ENCODE measurements at regions of chr7 and their contacts with region 1.

Region 1: GRCh38 chr7:139620676-139621344 is 97.3 kb downstream of the CLEC2L start:
- DNase-seq: peak; percentile 26
- H3K4me3 Mint-ChIP-seq: no peak overlapping the region
- H3K27ac Mint-ChIP-seq: peak overlapping the region; percentile 22
- H3K4me1 Mint-ChIP-seq: peaks cover 34% of the 10 kb centered on the region
- H3K27me3 Mint-ChIP-seq: peaks cover 1% of the 10 kb centered on the region

Region 2: DNA sequence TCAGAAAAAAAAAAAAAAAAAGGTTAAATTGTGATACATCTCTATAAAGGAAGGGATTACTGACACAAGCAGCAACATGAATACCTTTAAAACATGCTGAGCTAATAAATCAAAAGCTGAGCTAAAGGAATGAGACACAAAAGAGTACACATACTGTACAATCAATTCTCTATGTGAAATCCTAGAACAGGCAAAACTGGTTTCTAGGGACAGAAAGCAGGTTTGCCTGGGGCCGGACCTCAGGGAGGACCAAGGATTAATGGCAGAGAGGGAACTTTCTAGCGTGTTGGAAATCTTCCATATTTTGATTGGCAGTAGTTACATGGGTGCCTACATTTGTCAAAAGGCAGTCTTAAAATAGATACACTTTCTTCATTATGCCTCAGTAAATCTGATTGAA is 189.8 kb before region 1 on chr7:
- intact Hi-C with region 1: loop called (anchors 2 kb)
- DNase-seq: no peak
- H3K4me3 Mint-ChIP-seq: no peak overlapping the region
- H3K27ac Mint-ChIP-seq: no peak overlapping the region
- H3K4me1 Mint-ChIP-seq: peaks cover 6% of the 10 kb centered on the region
- H3K27me3 Mint-ChIP-seq: no peaks in the 10 kb centered on the region

Region 3: DNA sequence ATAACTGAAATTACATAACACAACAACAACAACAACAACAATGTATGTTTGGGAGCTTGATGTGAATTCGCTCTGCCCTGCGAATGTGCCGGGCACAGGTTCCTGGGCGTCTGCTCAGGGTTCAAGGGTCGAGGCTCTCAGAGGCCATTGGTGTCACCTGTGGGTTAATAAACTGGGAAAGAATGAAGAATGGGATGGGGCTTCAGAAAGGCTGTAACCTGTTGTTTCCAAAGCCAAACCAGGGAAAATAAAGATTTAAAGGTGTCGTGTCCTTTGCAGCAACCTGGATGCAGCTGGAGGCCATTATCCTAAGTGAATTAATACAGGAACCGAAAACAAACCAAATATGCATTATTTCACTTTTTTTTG is 120.1 kb before region 1 on chr7:
- intact Hi-C with region 1: loop called (anchors 1 kb)
- DNase-seq: no peak
- H3K4me3 Mint-ChIP-seq: no peak overlapping the region
- H3K27ac Mint-ChIP-seq: no peak overlapping the region
- H3K4me1 Mint-ChIP-seq: peaks cover 15% of the 10 kb centered on the region
- H3K27me3 Mint-ChIP-seq: peaks cover 21% of the 10 kb centered on the region

Region 4: GRCh38 chr7:139602143-139602722 is 18.6 kb before region 1 on chr7:
- intact Hi-C with region 1: loop called (anchors 1 kb)
- DNase-seq: no peak
- H3K4me3 Mint-ChIP-seq: no peak overlapping the region
- H3K27ac Mint-ChIP-seq: no peak overlapping the region
- H3K4me1 Mint-ChIP-seq: no peaks in the 10 kb centered on the region
- H3K27me3 Mint-ChIP-seq: no peaks in the 10 kb centered on the region

Region 5: GRCh38 chr7:140022582-140023211 is 401.9 kb after region 1 on chr7:
- intact Hi-C with region 1: no loop called
- DNase-seq: no peak
- H3K4me3 Mint-ChIP-seq: no peak overlapping the region
- H3K27ac Mint-ChIP-seq: no peak overlapping the region
- H3K4me1 Mint-ChIP-seq: no peaks in the 10 kb centered on the region
- H3K27me3 Mint-ChIP-seq: no peaks in the 10 kb centered on the region